Heart left ventricle (tissue), 16 donors: ENCODE measurements at regions of chr17 and their contacts with region 1.

Region 1: DNA sequence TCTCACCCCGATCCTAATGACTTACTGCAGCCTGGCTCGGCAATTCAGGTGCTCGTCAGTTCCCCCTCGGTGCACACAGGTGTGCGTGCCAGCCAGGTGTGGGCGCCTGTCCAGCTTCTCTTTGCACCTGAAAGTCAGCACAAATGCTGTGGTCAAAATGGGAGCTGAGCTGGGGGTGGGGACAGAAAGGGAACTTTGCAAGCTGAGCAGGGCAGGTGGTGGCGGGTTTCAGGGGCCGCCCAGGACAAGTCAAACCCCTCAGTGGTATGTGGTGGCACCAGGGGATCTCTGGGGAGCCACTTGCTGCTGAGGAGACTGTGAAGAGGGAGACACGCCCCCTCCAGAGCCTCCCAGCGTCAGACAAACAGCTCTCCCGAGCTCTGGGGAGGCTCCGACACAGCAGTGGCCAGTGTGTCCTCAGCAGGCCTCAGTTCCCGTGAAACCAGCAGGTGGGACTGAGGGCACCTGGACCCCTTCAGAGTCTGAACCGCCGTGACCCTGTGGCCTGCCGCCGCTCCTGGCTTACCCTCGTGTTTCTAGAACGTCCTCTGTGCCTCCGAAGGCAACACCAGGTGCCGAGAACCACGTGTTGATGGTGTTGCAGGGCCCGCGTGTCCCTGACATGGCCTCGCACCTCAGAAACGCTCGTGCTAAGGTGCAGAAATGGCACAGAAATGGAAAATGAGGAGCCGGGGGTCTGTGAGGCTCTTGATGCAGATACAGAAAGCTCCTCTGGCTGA is 233.5 kb upstream of the TNRC6C start:
- DNase-seq: no peak
- ATAC-seq: no peak
- H3K4me3 ChIP-seq: no peak overlapping the region
- H3K27ac ChIP-seq: no peak overlapping the region
- H3K4me1 ChIP-seq: peaks cover 0 to 27% (median 8%) of the 10 kb centered on the region in 12 donors
- H3K27me3 ChIP-seq: no peaks in the 10 kb centered on the region
- CTCF ChIP-seq: no peak
- POLR2A ChIP-seq: no peak

Region 2: GRCh38 chr17:77594416-77595209 is 130.4 kb before region 1 on chr17:
- intact Hi-C with region 1: loop called in 1 of 10 experiments (anchors 5 kb)
- DNase-seq: peak in 1 of 5 donors; percentile 16
- ATAC-seq: no peak
- H3K4me3 ChIP-seq: no peak overlapping the region
- H3K27ac ChIP-seq: no peak overlapping the region
- H3K4me1 ChIP-seq: no peaks in the 10 kb centered on the region
- H3K27me3 ChIP-seq: peaks cover 0 to 4% (median 0%) of the 10 kb centered on the region in 9 donors
- CTCF ChIP-seq: no peak
- POLR2A ChIP-seq: no peak